Breast epithelium (tissue), 4 donors: ENCODE measurements at regions of chr5 and their contacts with region 1.

Region 1: DNA sequence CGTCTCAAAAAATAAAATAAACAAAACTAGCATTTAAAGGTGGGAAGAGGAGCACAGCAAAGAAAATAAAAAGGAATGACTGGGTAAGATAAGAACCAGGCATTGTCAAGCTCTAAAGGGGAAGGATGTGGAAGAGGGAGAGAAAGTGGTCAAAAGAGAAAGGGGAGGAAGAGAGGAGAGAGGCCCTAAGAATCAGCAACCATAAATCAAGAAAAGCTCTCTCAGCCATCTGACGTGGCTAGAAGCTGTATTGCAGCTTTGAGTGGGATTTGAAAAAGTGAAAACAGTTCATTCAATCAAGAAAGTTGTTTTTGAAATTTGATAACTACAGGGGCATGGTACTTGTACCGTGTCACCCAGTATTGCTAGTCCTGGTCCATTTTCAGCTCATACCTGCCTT is 45.4 kb upstream of the F2R start:
- DNase-seq: no peak
- H3K4me3 ChIP-seq: no peak overlapping the region
- H3K27ac ChIP-seq: no peak overlapping the region
- H3K4me1 ChIP-seq: no peaks in the 10 kb centered on the region
- H3K27me3 ChIP-seq: no peaks in the 10 kb centered on the region
- CTCF ChIP-seq: no peak
- POLR2A ChIP-seq: no peak

Region 2: GRCh38 chr5:76652809-76653414 is 17.6 kb before region 1 on chr5:
- intact Hi-C with region 1: no loop called
- DNase-seq: no peak
- H3K4me3 ChIP-seq: no peak overlapping the region
- H3K27ac ChIP-seq: no peak overlapping the region
- H3K4me1 ChIP-seq: no peaks in the 10 kb centered on the region
- H3K27me3 ChIP-seq: no peaks in the 10 kb centered on the region
- CTCF ChIP-seq: no peak
- POLR2A ChIP-seq: no peak

Region 3: GRCh38 chr5:76701298-76701697 is 30.8 kb after region 1 on chr5:
- intact Hi-C with region 1: loop called (anchors 2 kb)
- DNase-seq: no peak
- H3K4me3 ChIP-seq: no peak overlapping the region
- H3K27ac ChIP-seq: no peak overlapping the region
- H3K4me1 ChIP-seq: no peaks in the 10 kb centered on the region
- H3K27me3 ChIP-seq: no peaks in the 10 kb centered on the region
- CTCF ChIP-seq: no peak
- POLR2A ChIP-seq: no peak